Psoas muscle (tissue), 8 donors: ENCODE measurements at regions of chr20 and their contacts with region 1.

Region 1: DNA sequence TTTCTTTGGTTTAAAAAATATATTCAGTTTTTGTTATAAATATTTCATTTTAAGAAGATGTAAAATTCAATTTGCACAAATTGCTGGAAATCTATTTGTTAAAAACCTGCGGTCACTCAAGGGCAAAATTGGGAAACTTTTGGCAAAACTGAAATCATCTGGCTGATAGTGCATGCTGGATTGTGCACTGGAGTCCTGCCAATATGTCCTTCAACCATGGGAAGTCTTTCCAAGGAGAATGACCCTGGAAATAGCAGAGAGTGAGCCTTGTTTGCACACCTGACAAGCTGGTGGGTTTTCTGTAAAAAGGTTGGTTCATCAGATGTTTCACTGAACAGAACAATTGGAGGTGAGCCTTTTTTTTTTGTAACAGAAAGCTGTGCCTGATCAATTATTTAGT is 413.5 kb downstream of the BTBD3 start:
- DNase-seq: no peak
- ATAC-seq: no peak
- H3K4me3 ChIP-seq: no peak overlapping the region
- H3K27ac ChIP-seq: no peak overlapping the region
- H3K4me1 ChIP-seq: no peaks in the 10 kb centered on the region
- H3K27me3 ChIP-seq: no peaks in the 10 kb centered on the region
- CTCF ChIP-seq: no peak

Region 2: GRCh38 chr20:12229891-12230290 is 101.3 kb before region 1 on chr20:
- intact Hi-C with region 1: no loop called
- DNase-seq: no peak
- ATAC-seq: no peak
- H3K4me3 ChIP-seq: no peak overlapping the region
- H3K27ac ChIP-seq: no peak overlapping the region
- H3K4me1 ChIP-seq: no peaks in the 10 kb centered on the region
- H3K27me3 ChIP-seq: no peaks in the 10 kb centered on the region
- CTCF ChIP-seq: no peak

Region 3: DNA sequence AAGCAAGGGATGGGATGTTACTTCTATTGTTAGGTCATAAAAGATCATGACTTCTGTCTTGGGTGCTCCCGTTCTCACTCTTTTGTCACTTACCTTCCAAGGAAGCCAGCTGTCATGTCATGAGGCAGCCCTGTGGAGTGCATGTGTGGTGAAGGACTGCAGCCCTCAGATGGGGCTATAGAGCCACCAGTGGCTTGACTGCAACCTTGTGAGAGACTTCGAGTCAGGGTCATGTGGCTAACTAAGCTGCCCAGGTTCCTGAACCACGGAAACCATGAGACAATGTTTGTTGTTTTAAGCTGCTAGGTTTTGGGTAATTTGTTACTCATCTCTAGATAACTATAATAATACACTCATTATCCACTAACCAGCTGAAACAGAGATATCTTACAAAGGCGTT is 63.5 kb after region 1 on chr20:
- intact Hi-C with region 1: loop called in 1 of 2 experiments (anchors 10 kb)
- DNase-seq: no peak
- ATAC-seq: no peak
- H3K4me3 ChIP-seq: no peak overlapping the region
- H3K27ac ChIP-seq: no peak overlapping the region
- H3K4me1 ChIP-seq: no peaks in the 10 kb centered on the region
- H3K27me3 ChIP-seq: no peaks in the 10 kb centered on the region
- CTCF ChIP-seq: no peak